Aorta (tissue), 5 donors: ENCODE measurements at regions of chr6 and their contacts with region 1.

Region 1: GRCh38 chr6:52577022-52577777 is at the start of gene TRAM2:
- DNase-seq: peak; percentile 90 to 95
- ATAC-seq: peak; percentile 87
- H3K4me3 ChIP-seq: peak within 1 kb of the TSS; percentile 71 to 90
- H3K27ac ChIP-seq: peak within 1 kb of the TSS; percentile 86 to 88
- H3K4me1 ChIP-seq: peaks cover 0 to 2% of the 10 kb centered on the region in 2 donors
- H3K27me3 ChIP-seq: no peaks in the 10 kb centered on the region
- total RNA-seq, gene TRAM2: 38.0 to 39.5 TPM

Region 2: DNA sequence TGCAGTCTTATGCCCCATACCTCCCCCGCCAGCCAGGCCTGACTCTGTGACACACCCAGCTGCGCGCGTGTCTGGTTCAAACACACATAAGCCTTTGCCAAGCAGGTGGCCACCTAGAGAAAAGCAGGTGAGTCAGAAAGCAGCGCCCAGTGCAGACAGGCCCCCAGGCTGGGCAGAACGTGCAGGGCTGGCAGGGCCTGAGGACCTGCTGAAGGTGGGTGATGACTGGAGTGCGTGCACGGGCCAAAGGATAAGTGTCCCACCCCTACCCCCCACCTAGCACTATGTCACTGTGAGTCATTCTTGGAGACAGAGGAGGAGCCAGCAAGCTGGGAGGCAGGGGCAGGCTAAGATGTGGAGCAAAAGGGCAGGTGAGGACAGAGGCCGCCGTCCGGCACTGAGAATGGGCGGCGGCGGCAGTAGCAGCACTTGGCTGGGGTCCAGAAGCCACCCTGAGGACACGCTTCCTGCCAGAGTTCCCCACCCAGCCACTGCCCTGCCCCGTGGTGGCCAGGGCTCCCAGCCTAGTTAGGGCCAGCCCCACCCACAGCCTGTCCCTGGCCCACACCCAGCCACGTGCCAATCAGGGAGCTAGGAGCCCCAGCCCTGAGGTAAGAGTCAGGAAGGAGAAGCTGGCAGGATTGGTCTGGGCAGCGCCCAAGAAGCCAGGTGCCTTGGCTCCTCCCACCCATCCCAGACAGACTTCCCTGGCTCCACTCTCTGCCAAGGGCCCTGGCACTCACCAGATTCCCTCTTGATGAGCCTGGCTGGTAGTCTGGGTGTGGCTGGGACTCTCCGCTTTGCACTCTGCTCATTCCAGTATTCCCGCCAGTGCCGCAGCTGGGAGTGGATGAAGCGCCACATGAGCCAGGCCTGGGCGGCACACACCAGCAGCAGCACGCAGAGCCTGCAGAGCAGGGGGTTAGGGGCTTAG is 73.1 kb before region 1 on chr6:
- intact Hi-C with region 1: loop called (anchors 5 kb)
- DNase-seq: peak; percentile 91 to 94
- ATAC-seq: peak; percentile 83
- H3K4me3 ChIP-seq: no peak overlapping the region
- H3K27ac ChIP-seq: peak overlapping the region in 1 of 2 donors; percentile 60
- H3K4me1 ChIP-seq: peaks cover 0 to 6% of the 10 kb centered on the region in 2 donors
- H3K27me3 ChIP-seq: no peaks in the 10 kb centered on the region

Region 3: GRCh38 chr6:52512199-52512598 is 65.0 kb before region 1 on chr6:
- intact Hi-C with region 1: loop called (anchors 2 to 5 kb)
- DNase-seq: peak; percentile 70 to 82
- ATAC-seq: peak; percentile 92
- H3K4me3 ChIP-seq: no peak overlapping the region
- H3K27ac ChIP-seq: peak overlapping the region; percentile 65 to 93
- H3K4me1 ChIP-seq: peaks cover 7 to 12% of the 10 kb centered on the region in 2 donors
- H3K27me3 ChIP-seq: no peaks in the 10 kb centered on the region

Region 4: DNA sequence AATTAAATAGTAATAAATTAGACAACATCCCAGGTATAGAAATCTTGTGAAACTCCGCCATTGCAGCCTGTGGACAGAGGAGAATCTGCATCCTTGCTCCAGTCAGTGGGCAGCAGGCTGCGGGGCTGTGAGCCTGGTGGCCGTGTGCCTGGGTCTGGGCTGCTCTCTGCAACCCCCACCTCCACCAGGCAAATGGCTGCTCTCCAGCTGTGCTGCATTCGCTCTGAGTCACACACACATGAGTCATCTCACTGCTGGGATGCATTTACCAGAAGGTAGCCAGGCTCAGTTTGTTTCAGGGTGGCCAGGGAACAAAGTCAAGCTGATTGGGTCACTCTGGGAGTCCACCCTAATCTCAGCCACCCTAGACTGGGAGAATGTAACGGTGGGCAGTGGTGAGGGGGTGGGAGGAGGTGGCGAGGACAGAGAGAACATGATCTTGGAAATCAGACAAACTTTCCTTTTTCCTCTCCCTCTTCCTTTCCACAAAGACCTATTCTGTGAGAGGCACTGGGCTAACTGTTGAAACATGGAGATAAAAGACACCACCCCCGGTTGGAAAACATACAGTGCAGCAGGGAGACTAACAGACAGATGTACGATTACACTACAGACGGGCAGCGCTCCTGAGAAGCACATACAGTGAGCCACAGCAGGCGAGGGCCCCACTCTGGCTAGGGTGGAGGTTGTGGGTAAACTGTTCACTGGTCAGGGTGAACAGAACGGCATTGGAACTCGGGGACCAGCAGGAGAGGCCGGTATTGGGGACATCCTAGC is 59.5 kb before region 1 on chr6:
- intact Hi-C with region 1: loop called (anchors 2 to 5 kb)
- DNase-seq: peak; percentile 91 to 94
- ATAC-seq: peak; percentile 92
- H3K4me3 ChIP-seq: no peak overlapping the region
- H3K27ac ChIP-seq: peak overlapping the region; percentile 62 to 90
- H3K4me1 ChIP-seq: peaks cover 3 to 8% of the 10 kb centered on the region in 2 donors
- H3K27me3 ChIP-seq: no peaks in the 10 kb centered on the region

Region 5: GRCh38 chr6:52566201-52566600 is 11.0 kb before region 1 on chr6:
- intact Hi-C with region 1: no loop called
- DNase-seq: no peak
- ATAC-seq: no peak
- H3K4me3 ChIP-seq: no peak overlapping the region
- H3K27ac ChIP-seq: peak overlapping the region in 1 of 2 donors; percentile 58
- H3K4me1 ChIP-seq: peaks cover 8% of the 10 kb centered on the region in 2 donors
- H3K27me3 ChIP-seq: no peaks in the 10 kb centered on the region